K562 (cell line): ENCODE measurements at regions of chr12 and their contacts with region 1.

Region 1: GRCh38 chr12:102095675-102096263 is 24.1 kb downstream of the NUP37 start:
- DNase-seq: peak in 3 of 4 experiments; percentile 14 to 29 (median 14)
- ATAC-seq: peak; percentile 89
- H3K4me3 ChIP-seq: no peak overlapping the region
- H3K27ac ChIP-seq: no peak overlapping the region
- H3K4me1 ChIP-seq: no peaks in the 10 kb centered on the region
- H3K27me3 ChIP-seq: no peaks in the 10 kb centered on the region
- CTCF ChIP-seq: peak; percentile 21 to 62 (median 33); a peak in 4 of 6 replicates
- EP300 ChIP-seq: no peak
- POLR2A ChIP-seq: no peak
- RAD21 ChIP-seq: peak; percentile 67 to 83

Region 2: GRCh38 chr12:102421801-102422583 is 326.2 kb after region 1 on chr12:
- CTCF ChIA-PET with region 1: no interaction called
- POLR2A ChIA-PET with region 1: no interaction called
- in situ Hi-C with region 1: no loop called
- intact Hi-C with region 1: no loop called
- DNase-seq: no peak
- ATAC-seq: peak; percentile 19; the same call in 2 of the 3 replicates
- H3K4me3 ChIP-seq: no peak overlapping the region
- H3K27ac ChIP-seq: peak overlapping the region; percentile 45; the same call in 1 of the 3 replicates
- H3K4me1 ChIP-seq: peaks cover 4 to 32% of the 10 kb centered on the region in 2 experiments; a peak in 4 of 5 replicates
- H3K27me3 ChIP-seq: no peaks in the 10 kb centered on the region
- CTCF ChIP-seq: no peak
- EP300 ChIP-seq: peak; percentile 14; the same call in 1 of the 2 replicates
- POLR2A ChIP-seq: no peak
- RAD21 ChIP-seq: no peak

Region 3: DNA sequence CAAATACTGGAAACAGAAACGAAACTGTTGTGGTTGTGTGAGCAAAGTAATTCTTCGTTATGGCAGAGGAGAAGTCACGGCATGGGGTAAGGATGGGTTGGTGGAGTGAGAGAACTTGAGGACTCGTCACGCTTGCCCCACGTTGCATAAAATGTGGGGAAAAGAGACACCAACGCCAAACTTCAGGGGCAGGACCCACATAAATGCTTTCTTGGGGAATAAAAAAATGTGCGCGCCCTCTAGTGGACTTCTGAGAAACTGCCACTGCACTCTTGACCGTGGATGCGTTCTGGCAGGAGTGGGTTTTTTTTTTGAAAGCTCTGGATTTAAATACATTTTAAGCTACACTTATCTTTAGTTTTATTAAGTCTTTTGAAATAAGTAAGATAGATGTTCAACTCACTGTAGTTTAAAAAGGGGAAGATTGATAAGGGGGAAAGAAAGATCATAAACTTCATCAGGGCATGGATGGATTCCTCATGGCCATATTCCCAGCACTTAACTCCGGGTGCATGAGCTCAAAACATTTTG is 388.7 kb after region 1 on chr12:
- CTCF ChIA-PET with region 1: no interaction called
- POLR2A ChIA-PET with region 1: no interaction called
- in situ Hi-C with region 1: no loop called
- intact Hi-C with region 1: loop called (anchors 1 kb)
- DNase-seq: peak; percentile 64 to 73 (median 68)
- ATAC-seq: peak; percentile 68
- H3K4me3 ChIP-seq: no peak overlapping the region
- H3K27ac ChIP-seq: no peak overlapping the region
- H3K4me1 ChIP-seq: peaks cover 0 to 7% of the 10 kb centered on the region in 2 experiments; a peak in 3 of 5 replicates
- H3K27me3 ChIP-seq: no peaks in the 10 kb centered on the region
- CTCF ChIP-seq: peak; percentile 68 to 85 (median 82)
- EP300 ChIP-seq: no peak
- POLR2A ChIP-seq: no peak
- RAD21 ChIP-seq: peak; percentile 54 to 71

Region 4: GRCh38 chr12:102702447-102703114 is 606.8 kb after region 1 on chr12:
- CTCF ChIA-PET with region 1: no interaction called
- POLR2A ChIA-PET with region 1: no interaction called
- in situ Hi-C with region 1: no loop called
- intact Hi-C with region 1: loop called (anchors 5 kb)
- DNase-seq: peak; percentile 63 to 71 (median 69)
- ATAC-seq: peak; percentile 86
- H3K4me3 ChIP-seq: no peak overlapping the region
- H3K27ac ChIP-seq: no peak overlapping the region
- H3K4me1 ChIP-seq: no peaks in the 10 kb centered on the region
- H3K27me3 ChIP-seq: no peaks in the 10 kb centered on the region
- CTCF ChIP-seq: peak; percentile 63 to 72 (median 69)
- EP300 ChIP-seq: no peak
- POLR2A ChIP-seq: no peak
- RAD21 ChIP-seq: peak; percentile 58 to 78

Region 5: DNA sequence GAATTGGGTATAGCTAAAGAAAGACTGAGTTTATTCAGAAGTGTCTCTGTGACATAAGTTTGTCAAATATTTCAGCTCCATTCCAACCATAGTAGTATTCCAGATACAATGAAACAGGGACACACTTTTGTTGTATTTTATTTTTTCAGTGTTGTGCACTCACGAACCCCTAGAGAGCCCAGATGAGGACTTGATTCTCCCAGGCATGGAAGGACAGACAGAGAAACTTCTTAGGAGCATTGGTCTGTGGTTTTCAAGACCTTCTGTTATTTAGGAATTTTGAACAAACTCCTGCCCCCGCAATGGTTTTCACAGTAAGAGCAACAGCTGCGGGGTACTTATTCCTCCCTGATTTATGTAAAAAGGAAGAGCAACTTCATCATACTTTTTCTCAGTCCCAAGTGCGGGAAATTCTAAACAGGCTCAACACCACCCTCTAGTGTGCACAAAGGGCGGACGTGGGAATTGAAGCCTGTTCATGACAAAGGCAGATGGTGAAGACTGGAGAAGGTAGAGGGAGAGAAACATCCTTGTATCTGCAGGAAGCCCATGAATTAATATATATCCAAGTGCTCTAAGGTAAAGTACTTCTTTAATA is 673.6 kb after region 1 on chr12:
- CTCF ChIA-PET with region 1: interaction called, 8 read pairs
- POLR2A ChIA-PET with region 1: no interaction called
- in situ Hi-C with region 1: no loop called
- intact Hi-C with region 1: loop called (anchors 10 kb)
- DNase-seq: peak; percentile 45 to 57 (median 50)
- ATAC-seq: peak; percentile 96
- H3K4me3 ChIP-seq: no peak overlapping the region
- H3K27ac ChIP-seq: no peak overlapping the region
- H3K4me1 ChIP-seq: no peaks in the 10 kb centered on the region
- H3K27me3 ChIP-seq: peaks cover 0 to 3% of the 10 kb centered on the region in 2 experiments; a peak in 1 of 5 replicates
- CTCF ChIP-seq: peak; percentile 63 to 83 (median 68)
- EP300 ChIP-seq: no peak
- POLR2A ChIP-seq: no peak
- RAD21 ChIP-seq: peak; percentile 71 to 78